Activated CD4-positive, alpha-beta T cell treated with anti-CD3 and anti-CD28 coated beads for 36 hours (primary cell): ENCODE measurements at regions of chr2 and their contacts with region 1.

Region 1: GRCh38 chr2:176454893-176455811 is 185.9 kb downstream of the MTX2 start:
- DNase-seq: peak; percentile 91
- ATAC-seq: peak; percentile 57
- H3K4me3 Mint-ChIP-seq: no peak overlapping the region
- H3K27ac Mint-ChIP-seq: no peak overlapping the region
- H3K4me1 Mint-ChIP-seq: no peaks in the 10 kb centered on the region
- H3K27me3 Mint-ChIP-seq: peaks cover 31% of the 10 kb centered on the region

Region 2: GRCh38 chr2:176432434-176432833 is 22.7 kb before region 1 on chr2:
- CTCF ChIA-PET with region 1: interaction called, 20 read pairs
- POLR2A ChIA-PET with region 1: interaction called, 4 read pairs
- intact Hi-C with region 1: no loop called
- DNase-seq: no peak
- ATAC-seq: no peak
- H3K4me3 Mint-ChIP-seq: no peak overlapping the region
- H3K27ac Mint-ChIP-seq: no peak overlapping the region
- H3K4me1 Mint-ChIP-seq: no peaks in the 10 kb centered on the region
- H3K27me3 Mint-ChIP-seq: peaks cover 26% of the 10 kb centered on the region

Region 3: GRCh38 chr2:176554101-176555048 is 99.2 kb after region 1 on chr2:
- CTCF ChIA-PET with region 1: interaction called, 14 read pairs
- POLR2A ChIA-PET with region 1: no interaction called
- intact Hi-C with region 1: loop called (anchors 1 to 2 kb)
- DNase-seq: peak; percentile 56
- ATAC-seq: peak; percentile 49
- H3K4me3 Mint-ChIP-seq: peak overlapping the region; percentile 60
- H3K27ac Mint-ChIP-seq: peak overlapping the region; percentile 26
- H3K4me1 Mint-ChIP-seq: peaks cover 11% of the 10 kb centered on the region
- H3K27me3 Mint-ChIP-seq: peaks cover 33% of the 10 kb centered on the region

Region 4: DNA sequence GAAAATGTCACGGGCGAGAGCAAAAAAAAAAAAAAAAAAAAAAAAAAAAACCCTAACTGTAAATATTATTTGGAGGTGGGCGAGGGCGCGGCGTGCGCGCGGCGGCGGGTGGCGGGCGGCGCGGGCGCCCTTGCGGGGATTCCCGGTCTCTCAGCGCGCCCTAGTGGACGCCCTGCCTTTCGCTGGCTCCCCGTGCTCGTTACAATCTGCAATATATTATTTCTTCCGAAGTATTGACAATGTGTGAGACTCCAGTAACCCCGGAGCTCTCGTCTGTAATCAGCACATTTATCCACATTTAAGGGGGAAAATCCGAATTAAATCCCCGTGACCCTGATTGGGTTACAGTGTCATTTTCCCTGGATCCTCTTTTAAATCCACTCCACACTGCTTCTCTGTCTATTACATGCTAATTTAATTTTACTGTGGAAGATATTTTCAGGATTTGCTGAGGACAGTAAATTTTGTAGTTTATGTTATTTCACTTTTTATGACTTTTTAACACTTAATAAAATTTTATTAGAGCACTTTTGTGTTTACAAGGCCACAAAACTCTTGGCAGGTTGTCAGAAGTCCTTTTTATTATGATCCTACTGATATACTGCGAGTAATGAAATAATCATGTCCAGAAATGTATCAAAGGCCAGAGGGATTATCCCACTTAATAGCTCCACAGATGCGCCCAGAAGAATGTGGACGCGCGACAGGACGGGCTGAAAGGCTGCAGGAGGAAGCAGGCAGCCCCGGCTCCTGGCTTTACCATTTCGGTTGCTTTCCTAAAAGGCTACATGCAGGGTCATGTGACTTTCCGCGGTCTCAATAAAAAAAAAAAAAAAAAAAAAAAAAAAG is 183.2 kb after region 1 on chr2:
- CTCF ChIA-PET with region 1: interaction called, 10 read pairs
- POLR2A ChIA-PET with region 1: no interaction called
- intact Hi-C with region 1: loop called (anchors 1 to 5 kb)
- DNase-seq: peak; percentile 80
- ATAC-seq: peak; percentile 86
- H3K4me3 Mint-ChIP-seq: peak overlapping the region; percentile 55
- H3K27ac Mint-ChIP-seq: no peak overlapping the region
- H3K4me1 Mint-ChIP-seq: peaks cover 5% of the 10 kb centered on the region
- H3K27me3 Mint-ChIP-seq: peaks cover 44% of the 10 kb centered on the region

Region 5: GRCh38 chr2:176643646-176644045 is 188.5 kb after region 1 on chr2:
- CTCF ChIA-PET with region 1: interaction called, 10 read pairs
- POLR2A ChIA-PET with region 1: no interaction called
- intact Hi-C with region 1: loop called (anchors 1 to 5 kb)
- DNase-seq: no peak
- ATAC-seq: no peak
- H3K4me3 Mint-ChIP-seq: no peak overlapping the region
- H3K27ac Mint-ChIP-seq: no peak overlapping the region
- H3K4me1 Mint-ChIP-seq: no peaks in the 10 kb centered on the region
- H3K27me3 Mint-ChIP-seq: peaks cover 56% of the 10 kb centered on the region

Region 6: GRCh38 chr2:176653479-176654443 is 198.6 kb after region 1 on chr2:
- CTCF ChIA-PET with region 1: interaction called, 6 read pairs
- POLR2A ChIA-PET with region 1: no interaction called
- intact Hi-C with region 1: loop called in 1 of 2 experiments (anchors 5 kb)
- DNase-seq: peak; percentile 60
- ATAC-seq: peak; percentile 69
- H3K4me3 Mint-ChIP-seq: no peak overlapping the region
- H3K27ac Mint-ChIP-seq: no peak overlapping the region
- H3K4me1 Mint-ChIP-seq: peaks cover 8% of the 10 kb centered on the region
- H3K27me3 Mint-ChIP-seq: peaks cover 41% of the 10 kb centered on the region